Endothelial cell of umbilical vein (primary cell): ENCODE measurements at regions of chr6 and their contacts with region 1.

Region 1: DNA sequence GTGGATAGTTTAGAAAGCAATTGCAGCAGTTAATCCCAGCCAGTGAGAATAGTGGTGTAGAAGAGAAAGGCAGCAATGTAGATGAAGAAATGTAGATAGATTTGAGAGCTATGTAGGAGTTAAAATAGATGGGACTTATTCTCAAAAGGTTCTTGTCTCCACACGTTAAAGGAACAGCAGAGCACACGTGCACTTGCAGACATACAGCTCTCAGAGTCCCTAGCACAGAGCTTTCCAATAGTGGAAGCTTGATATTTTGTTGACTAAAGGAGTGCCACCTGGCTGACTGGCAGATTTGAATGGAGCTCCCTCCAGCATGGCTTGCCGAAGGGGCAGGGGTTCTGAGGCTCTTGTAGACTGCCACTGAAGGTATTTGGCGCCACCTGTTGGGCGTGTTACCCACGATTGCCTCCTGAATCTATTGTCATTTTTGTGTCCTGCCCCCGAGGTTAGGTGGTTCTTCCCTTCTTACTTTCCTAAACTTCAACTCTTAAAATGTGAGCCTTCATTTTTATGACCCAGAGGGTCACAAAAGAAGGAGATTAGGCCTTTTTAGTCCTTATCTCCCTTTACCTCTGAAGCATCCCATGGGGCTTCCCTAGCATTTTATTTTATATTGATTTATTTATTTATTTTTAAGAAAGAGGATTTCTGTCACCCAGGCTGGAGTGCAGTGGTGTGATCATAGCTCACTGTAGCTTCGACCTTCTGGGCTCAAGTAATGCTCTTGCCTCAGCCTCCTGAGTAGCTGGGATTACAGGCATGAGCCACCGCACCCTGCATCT is 16.4 kb downstream of the BRD2 start:
- DNase-seq: peak; percentile 87
- H3K4me3 ChIP-seq: no peak overlapping the region
- H3K27ac ChIP-seq: no peak overlapping the region
- H3K4me1 ChIP-seq: no peaks in the 10 kb centered on the region
- H3K27me3 ChIP-seq: peaks cover 0 to 17% of the 10 kb centered on the region in 2 experiments
- CTCF ChIP-seq: peak; percentile 81 to 86
- POLR2A ChIP-seq: peak; percentile 26

Region 2: GRCh38 chr6:32825966-32826365 is 158.8 kb before region 1 on chr6:
- CTCF ChIA-PET with region 1: interaction called, 12 read pairs
- POLR2A ChIA-PET with region 1: no interaction called
- dilution Hi-C with region 1: no loop called
- intact Hi-C with region 1: no loop called
- DNase-seq: peak; percentile 48
- H3K4me3 ChIP-seq: no peak overlapping the region
- H3K27ac ChIP-seq: no peak overlapping the region
- H3K4me1 ChIP-seq: no peaks in the 10 kb centered on the region
- H3K27me3 ChIP-seq: no peaks in the 10 kb centered on the region
- CTCF ChIP-seq: peak; percentile 13 to 20
- POLR2A ChIP-seq: no peak

Region 3: DNA sequence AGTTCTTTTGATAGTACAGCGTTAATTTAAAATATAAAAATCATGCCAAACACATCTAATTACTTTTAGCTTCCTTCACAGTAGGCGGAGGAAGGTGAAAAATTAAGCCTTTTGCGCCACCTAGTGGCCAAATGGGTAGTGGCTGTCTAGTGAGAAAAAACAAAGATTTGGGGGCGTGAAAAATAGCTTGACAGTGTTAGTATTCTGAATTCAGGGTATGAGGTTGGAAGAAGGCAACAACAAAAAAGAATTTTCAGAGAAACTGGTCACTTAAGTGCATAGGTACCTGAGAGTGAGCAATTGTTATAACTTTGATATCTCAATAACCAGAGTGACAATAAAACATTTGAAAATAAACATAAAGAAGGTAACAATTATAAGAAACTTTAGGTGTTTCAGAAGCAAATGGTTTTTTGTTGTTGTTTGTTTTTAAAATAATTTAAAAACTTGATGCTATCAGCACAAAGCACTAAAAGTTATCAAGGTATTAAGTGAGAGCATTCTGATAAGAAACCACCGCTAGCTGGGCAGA is 116.5 kb before region 1 on chr6:
- CTCF ChIA-PET with region 1: interaction called, 31 read pairs
- POLR2A ChIA-PET with region 1: interaction called, 4 read pairs
- dilution Hi-C with region 1: no loop called
- intact Hi-C with region 1: no loop called
- DNase-seq: peak; percentile 83
- H3K4me3 ChIP-seq: no peak overlapping the region
- H3K27ac ChIP-seq: no peak overlapping the region
- H3K4me1 ChIP-seq: no peaks in the 10 kb centered on the region
- H3K27me3 ChIP-seq: peaks cover 33 to 58% of the 10 kb centered on the region in 2 experiments
- CTCF ChIP-seq: peak; percentile 69 to 72
- POLR2A ChIP-seq: no peak

Region 4: DNA sequence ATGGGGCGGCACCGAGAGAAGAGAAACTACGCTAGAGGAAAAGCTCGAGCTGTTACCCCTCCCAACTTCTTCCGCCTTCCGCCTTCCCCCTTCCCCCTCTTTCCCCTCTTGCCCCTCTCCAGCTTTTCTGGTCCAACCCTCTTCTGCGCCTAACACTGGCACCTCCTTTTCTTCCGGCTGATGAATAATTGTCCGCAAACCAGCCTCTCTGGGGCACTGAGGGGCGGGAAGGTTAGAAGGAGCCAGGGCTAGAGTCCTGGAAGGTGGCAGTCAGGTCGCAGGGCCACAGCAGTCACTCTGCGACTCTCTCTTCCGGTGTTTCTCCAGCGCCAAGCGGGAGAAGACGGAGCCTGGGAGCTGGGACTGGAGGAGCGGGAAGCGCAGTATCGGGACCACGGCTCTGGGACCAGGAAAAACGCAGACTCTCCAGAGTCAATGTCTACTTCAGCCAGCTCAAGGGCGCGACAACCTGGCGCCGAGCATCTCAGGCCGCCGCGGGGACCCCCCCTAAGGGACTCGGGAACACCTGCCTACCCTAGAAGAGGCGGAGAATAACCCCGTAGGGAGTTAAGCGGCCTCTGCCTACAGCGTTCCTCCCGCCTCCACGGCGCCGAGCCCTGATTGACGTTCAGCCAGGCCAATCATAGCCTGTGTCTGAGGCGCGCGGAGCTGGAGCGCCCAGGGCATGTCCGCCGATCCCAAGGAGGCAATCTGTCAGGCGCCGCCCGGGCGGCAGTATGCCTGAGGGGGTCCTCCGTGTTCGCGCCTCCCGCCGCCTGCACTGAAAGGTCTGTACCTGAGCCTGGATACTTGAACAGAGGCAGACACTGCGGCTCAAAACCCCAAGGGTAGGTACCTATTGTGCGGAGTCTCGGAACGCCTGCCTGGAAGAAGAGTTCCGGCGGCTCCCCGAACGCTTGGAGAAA is 90.5 kb before region 1 on chr6:
- CTCF ChIA-PET with region 1: interaction called, 192 read pairs
- POLR2A ChIA-PET with region 1: no interaction called
- dilution Hi-C with region 1: no loop called
- intact Hi-C with region 1: no loop called
- DNase-seq: peak; percentile 98
- H3K4me3 ChIP-seq: peak overlapping the region; percentile 24 to 67 (median 61)
- H3K27ac ChIP-seq: peak overlapping the region; percentile 45
- H3K4me1 ChIP-seq: peaks cover 17% of the 10 kb centered on the region
- H3K27me3 ChIP-seq: peaks cover 0 to 1% of the 10 kb centered on the region in 2 experiments
- CTCF ChIP-seq: no peak
- POLR2A ChIP-seq: peak; percentile 72

Region 5: GRCh38 chr6:32933636-32934085 is 51.1 kb before region 1 on chr6:
- CTCF ChIA-PET with region 1: interaction called, 580 read pairs
- POLR2A ChIA-PET with region 1: interaction called, 7 read pairs
- dilution Hi-C with region 1: no loop called
- intact Hi-C with region 1: loop called (anchors 1 kb)
- DNase-seq: peak; percentile 76
- H3K4me3 ChIP-seq: no peak overlapping the region
- H3K27ac ChIP-seq: no peak overlapping the region
- H3K4me1 ChIP-seq: no peaks in the 10 kb centered on the region
- H3K27me3 ChIP-seq: peaks cover 41 to 73% of the 10 kb centered on the region in 2 experiments
- CTCF ChIP-seq: peak; percentile 73
- POLR2A ChIP-seq: no peak

Region 6: GRCh38 chr6:32952817-32953739 is 31.7 kb before region 1 on chr6 and contains the start of gene HLA-DMA:
- CTCF ChIA-PET with region 1: interaction called, 64 read pairs
- POLR2A ChIA-PET with region 1: no interaction called
- dilution Hi-C with region 1: no loop called
- intact Hi-C with region 1: loop called (anchors 1 kb)
- DNase-seq: peak; percentile 96
- H3K4me3 ChIP-seq: no peak within 1 kb of the TSS
- H3K27ac ChIP-seq: no peak within 1 kb of the TSS
- H3K4me1 ChIP-seq: no peaks in the 10 kb centered on the region
- H3K27me3 ChIP-seq: no peaks in the 10 kb centered on the region
- CTCF ChIP-seq: peak; percentile 80 to 81
- POLR2A ChIP-seq: no peak
- total RNA-seq, gene HLA-DMA: 0.53 and 1.2 TPM in 2 replicates

Region 7: GRCh38 chr6:33001685-33002084 is 16.9 kb after region 1 on chr6:
- CTCF ChIA-PET with region 1: interaction called, 10 read pairs
- POLR2A ChIA-PET with region 1: no interaction called
- dilution Hi-C with region 1: no loop called
- intact Hi-C with region 1: no loop called
- DNase-seq: no peak
- H3K4me3 ChIP-seq: no peak overlapping the region
- H3K27ac ChIP-seq: no peak overlapping the region
- H3K4me1 ChIP-seq: no peaks in the 10 kb centered on the region
- H3K27me3 ChIP-seq: peaks cover 10 to 34% of the 10 kb centered on the region in 2 experiments
- CTCF ChIP-seq: no peak
- POLR2A ChIP-seq: no peak

Region 8: GRCh38 chr6:33040157-33040556 is 55.4 kb after region 1 on chr6:
- CTCF ChIA-PET with region 1: no interaction called
- POLR2A ChIA-PET with region 1: no interaction called
- dilution Hi-C with region 1: no loop called
- intact Hi-C with region 1: no loop called
- DNase-seq: no peak
- H3K4me3 ChIP-seq: no peak overlapping the region
- H3K27ac ChIP-seq: no peak overlapping the region
- H3K4me1 ChIP-seq: no peaks in the 10 kb centered on the region
- H3K27me3 ChIP-seq: peaks cover 13 to 21% of the 10 kb centered on the region in 2 experiments
- CTCF ChIP-seq: no peak
- POLR2A ChIP-seq: no peak

Region 9: DNA sequence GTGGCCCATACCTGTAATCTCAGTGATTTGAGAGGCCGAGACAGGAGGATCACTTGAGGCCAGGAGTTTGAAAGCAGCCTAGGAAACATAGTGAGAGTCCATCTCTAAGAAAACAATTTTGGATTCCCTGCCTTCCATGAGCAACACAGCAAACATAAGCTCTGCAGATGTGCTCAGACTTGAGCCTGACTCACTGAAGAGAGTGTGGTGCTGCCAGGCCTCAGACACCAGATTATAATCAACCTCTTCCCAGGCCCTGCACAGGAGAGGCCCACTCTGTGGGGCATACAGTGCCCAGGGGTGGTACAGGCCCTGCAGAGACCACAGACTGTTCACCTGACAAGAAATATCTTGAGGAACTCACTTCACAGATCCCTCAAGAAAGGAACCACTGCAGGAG is 110.9 kb after region 1 on chr6:
- CTCF ChIA-PET with region 1: no interaction called
- POLR2A ChIA-PET with region 1: no interaction called
- dilution Hi-C with region 1: no loop called
- intact Hi-C with region 1: no loop called
- DNase-seq: no peak
- H3K4me3 ChIP-seq: no peak overlapping the region
- H3K27ac ChIP-seq: no peak overlapping the region
- H3K4me1 ChIP-seq: no peaks in the 10 kb centered on the region
- H3K27me3 ChIP-seq: peaks cover 20 to 25% of the 10 kb centered on the region in 2 experiments
- CTCF ChIP-seq: no peak
- POLR2A ChIP-seq: no peak